Uterus (tissue), 4 donors: ENCODE measurements at regions of chr17 and their contacts with region 1.

Region 1: GRCh38 chr17:62703775-62704378 is 76.4 kb downstream of the MRC2 start:
- DNase-seq: peak; percentile 56 to 81
- H3K4me3 ChIP-seq: peak overlapping the region; percentile 23 to 58
- H3K27ac ChIP-seq: peak overlapping the region; percentile 68 to 75
- H3K4me1 ChIP-seq: peaks cover 0 to 5% of the 10 kb centered on the region in 2 donors
- H3K27me3 ChIP-seq: no peaks in the 10 kb centered on the region
- CTCF ChIP-seq: peak; percentile 81 to 94 (median 92)
- POLR2A ChIP-seq: peak in 1 of 2 donors; percentile 15

Region 2: GRCh38 chr17:62565817-62566216 is 138.1 kb before region 1 on chr17:
- intact Hi-C with region 1: no loop called
- DNase-seq: no peak
- H3K4me3 ChIP-seq: no peak overlapping the region
- H3K27ac ChIP-seq: no peak overlapping the region
- H3K4me1 ChIP-seq: no peaks in the 10 kb centered on the region
- H3K27me3 ChIP-seq: no peaks in the 10 kb centered on the region
- CTCF ChIP-seq: no peak
- POLR2A ChIP-seq: no peak

Region 3: DNA sequence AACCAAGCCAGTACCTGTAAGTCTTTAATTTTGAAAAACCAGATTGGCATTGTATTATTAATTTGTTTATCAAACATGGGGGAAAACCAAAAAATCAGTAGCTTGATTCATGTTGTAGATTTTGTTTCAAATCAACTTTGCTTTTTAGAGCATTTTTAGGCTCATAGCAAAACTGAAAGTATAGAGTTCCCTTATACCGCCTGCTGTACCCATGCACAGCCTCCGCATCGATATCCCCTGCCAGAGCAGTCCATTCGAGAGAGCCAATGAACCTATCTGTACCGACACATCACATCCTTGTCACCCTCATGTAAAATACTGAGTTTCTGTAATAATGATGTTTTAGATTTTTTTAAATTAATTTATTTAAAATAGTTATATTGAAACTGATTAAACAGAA is 92.6 kb before region 1 on chr17:
- intact Hi-C with region 1: no loop called
- DNase-seq: no peak
- H3K4me3 ChIP-seq: no peak overlapping the region
- H3K27ac ChIP-seq: no peak overlapping the region
- H3K4me1 ChIP-seq: no peaks in the 10 kb centered on the region
- H3K27me3 ChIP-seq: no peaks in the 10 kb centered on the region
- CTCF ChIP-seq: no peak
- POLR2A ChIP-seq: no peak

Region 4: DNA sequence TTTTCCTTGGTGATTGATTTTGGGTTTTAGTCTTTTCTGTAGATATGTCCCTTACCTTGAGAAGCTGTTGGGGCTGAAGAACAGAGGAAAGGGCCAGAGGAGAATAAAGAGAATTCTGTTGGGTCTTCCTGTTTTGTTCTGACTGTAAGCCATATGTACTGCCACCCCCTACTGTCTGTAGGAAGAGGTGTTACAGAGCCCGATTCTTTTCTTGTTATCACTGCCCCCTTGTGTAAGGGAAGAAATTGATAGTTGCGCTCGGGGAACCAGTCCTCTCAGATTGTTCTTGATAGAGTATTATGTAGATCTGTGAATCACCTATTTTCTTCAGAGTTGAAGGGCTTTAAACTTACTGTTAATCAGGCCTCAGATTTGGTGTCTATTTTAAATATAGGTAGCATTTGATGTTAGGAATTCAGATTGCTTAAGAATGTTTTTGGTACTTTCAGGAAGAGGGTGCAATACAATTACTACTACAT is 264.6 kb after region 1 on chr17:
- intact Hi-C with region 1: loop called (anchors 10 kb)
- DNase-seq: peak in 1 of 2 donors; percentile 40
- H3K4me3 ChIP-seq: no peak overlapping the region
- H3K27ac ChIP-seq: no peak overlapping the region
- H3K4me1 ChIP-seq: no peaks in the 10 kb centered on the region
- H3K27me3 ChIP-seq: no peaks in the 10 kb centered on the region
- CTCF ChIP-seq: peak; percentile 74 to 90 (median 84)
- POLR2A ChIP-seq: no peak

Region 5: GRCh38 chr17:63406689-63407330 is 702.9 kb after region 1 on chr17:
- intact Hi-C with region 1: loop called (anchors 5 kb)
- DNase-seq: peak; percentile 60 to 82
- H3K4me3 ChIP-seq: no peak overlapping the region
- H3K27ac ChIP-seq: no peak overlapping the region
- H3K4me1 ChIP-seq: no peaks in the 10 kb centered on the region
- H3K27me3 ChIP-seq: no peaks in the 10 kb centered on the region
- CTCF ChIP-seq: peak; percentile 78 to 85 (median 84)
- POLR2A ChIP-seq: no peak